Common myeloid progenitor, CD34-positive (primary cell): ENCODE measurements at regions of chr11 and their contacts with region 1.

Region 1: DNA sequence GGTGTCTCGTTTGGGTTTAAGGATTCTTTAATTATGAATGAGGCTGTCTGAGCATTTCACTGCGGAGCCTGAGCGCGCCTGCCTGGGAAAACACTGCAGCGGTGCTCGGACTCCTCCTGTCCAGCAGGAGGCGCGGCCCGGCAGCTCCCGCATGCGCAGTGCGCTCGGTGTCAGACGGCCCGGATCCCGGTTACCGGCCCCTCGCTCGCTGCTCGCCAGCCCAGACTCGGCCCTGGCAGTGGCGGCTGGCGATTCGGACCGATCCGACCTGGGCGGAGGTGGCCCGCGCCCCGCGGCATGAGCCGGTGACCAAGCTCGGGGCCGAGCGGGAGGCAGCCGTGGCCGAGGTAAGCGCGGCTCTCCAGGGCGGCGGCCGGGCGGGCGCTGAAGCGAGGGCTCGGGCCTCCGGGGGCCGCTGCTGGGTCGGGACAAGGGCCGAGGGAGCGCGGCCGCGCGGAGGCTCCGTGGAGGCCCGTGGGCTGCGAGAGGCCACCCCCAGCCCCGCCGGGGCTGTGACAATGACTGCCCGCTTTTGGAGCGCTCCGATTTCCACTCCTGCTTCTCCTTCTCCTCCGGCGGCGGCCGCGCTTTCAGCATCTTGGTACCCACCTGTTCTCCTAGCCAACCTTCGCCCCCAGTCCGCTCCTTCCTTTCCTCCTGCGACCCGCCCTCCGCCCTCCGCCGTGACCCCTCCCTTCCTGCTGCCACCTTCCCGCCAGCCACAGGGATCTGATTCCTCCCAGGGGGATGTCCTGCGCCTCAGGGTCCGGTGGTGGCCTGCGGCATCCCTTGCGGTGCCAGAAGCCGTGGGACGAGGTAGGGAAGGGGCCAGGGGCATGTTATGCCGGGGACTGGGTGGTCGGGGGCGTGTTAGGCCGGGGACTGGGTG is at the start of gene EXT2:
- DNase-seq: peak; percentile 81 to 84 (median 83)
- H3K4me3 ChIP-seq: peak within 1 kb of the TSS; percentile 80 to 96 (median 86)
- H3K27ac ChIP-seq: peak within 1 kb of the TSS; percentile 7 to 68
- H3K4me1 ChIP-seq: peaks cover 3 to 13% (median 8%) of the 10 kb centered on the region in 4 experiments
- H3K27me3 ChIP-seq: no peaks in the 10 kb centered on the region

Region 2: GRCh38 chr11:44065841-44066731 is 29.7 kb before region 1 on chr11 and contains the start of gene ACCS:
- CTCF ChIA-PET with region 1: interaction called, 34 read pairs
- POLR2A ChIA-PET with region 1: no interaction called
- DNase-seq: peak; percentile 98 to 99 (median 98)
- H3K4me3 ChIP-seq: peak within 1 kb of the TSS; percentile 45 to 91 (median 78)
- H3K27ac ChIP-seq: peak within 1 kb of the TSS; percentile 61 to 95
- H3K4me1 ChIP-seq: peaks cover 9 to 19% (median 14%) of the 10 kb centered on the region in 4 experiments
- H3K27me3 ChIP-seq: no peaks in the 10 kb centered on the region

Region 3: DNA sequence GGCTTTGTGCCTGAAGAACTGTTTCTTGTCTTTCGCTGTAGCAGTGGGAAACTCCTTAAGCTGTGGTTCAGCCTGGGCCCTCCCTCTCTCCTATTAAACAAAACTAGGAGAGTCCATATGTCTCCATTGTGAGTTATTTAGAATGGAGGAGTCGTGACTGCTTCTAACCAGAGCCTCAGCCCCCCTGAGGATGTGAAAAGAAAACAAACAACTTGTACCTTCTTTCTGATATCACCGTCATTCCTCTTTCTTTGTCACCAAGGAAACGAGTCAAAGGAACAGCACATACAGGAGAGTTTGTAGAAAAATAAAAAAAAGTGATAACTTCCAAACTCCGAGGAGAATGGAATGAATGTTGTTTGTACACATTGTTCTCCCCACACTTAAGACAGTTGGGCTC is 11.8 kb before region 1 on chr11:
- CTCF ChIA-PET with region 1: interaction called, 15 read pairs
- POLR2A ChIA-PET with region 1: no interaction called
- DNase-seq: no peak
- H3K4me3 ChIP-seq: no peak overlapping the region
- H3K27ac ChIP-seq: no peak overlapping the region
- H3K4me1 ChIP-seq: peaks cover 0 to 6% (median 4%) of the 10 kb centered on the region in 4 experiments
- H3K27me3 ChIP-seq: no peaks in the 10 kb centered on the region

Region 4: DNA sequence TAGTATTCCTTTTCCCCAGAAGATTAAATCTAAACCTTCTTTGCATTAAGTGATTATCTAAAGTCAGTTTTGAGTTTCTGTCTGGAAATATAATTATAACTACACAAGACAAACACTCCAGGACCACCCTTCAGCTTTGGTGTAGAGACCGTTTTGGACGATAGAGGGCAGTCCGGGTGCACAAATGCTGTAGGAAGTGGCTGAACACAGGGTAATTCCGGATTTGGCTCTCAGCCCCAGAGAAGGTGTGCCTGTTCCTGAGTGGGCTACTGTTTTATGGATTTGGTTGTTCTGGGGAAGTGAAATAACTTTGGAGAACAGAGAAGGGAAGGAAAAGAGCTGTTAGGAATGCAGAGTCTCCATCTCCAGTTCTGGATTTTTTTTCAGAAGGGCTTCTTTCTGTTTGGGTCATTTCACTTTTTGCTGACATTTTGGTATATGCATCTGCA is 14.5 kb after region 1 on chr11:
- CTCF ChIA-PET with region 1: interaction called, 84 read pairs
- POLR2A ChIA-PET with region 1: no interaction called
- DNase-seq: peak; percentile 60 to 78 (median 72)
- H3K4me3 ChIP-seq: no peak overlapping the region
- H3K27ac ChIP-seq: no peak overlapping the region
- H3K4me1 ChIP-seq: peaks cover 0 to 4% (median 2%) of the 10 kb centered on the region in 4 experiments
- H3K27me3 ChIP-seq: no peaks in the 10 kb centered on the region

Region 5: GRCh38 chr11:44120169-44120568 is 24.4 kb after region 1 on chr11:
- CTCF ChIA-PET with region 1: interaction called, 14 read pairs
- POLR2A ChIA-PET with region 1: no interaction called
- DNase-seq: peak in 2 of 3 donors; percentile 12 to 24
- H3K4me3 ChIP-seq: no peak overlapping the region
- H3K27ac ChIP-seq: no peak overlapping the region
- H3K4me1 ChIP-seq: no peaks in the 10 kb centered on the region
- H3K27me3 ChIP-seq: no peaks in the 10 kb centered on the region

Region 6: DNA sequence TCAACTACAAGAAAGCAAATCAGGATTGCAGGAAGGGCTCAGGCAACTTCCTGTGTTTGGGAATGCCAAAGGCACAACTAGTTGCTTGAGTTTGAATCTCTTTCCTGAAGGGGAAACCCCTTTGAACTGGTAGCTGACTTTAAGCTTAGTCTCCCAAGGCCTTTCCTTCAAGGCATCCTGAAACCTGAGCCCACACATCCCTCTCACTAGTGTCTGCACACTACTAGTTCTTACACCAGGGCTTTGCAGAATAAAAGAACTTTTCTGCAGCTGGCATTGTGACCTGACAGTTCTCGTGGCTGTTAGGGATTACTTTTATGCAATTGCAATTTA is 95.1 kb after region 1 on chr11:
- CTCF ChIA-PET with region 1: no interaction called
- POLR2A ChIA-PET with region 1: no interaction called
- DNase-seq: no peak
- H3K4me3 ChIP-seq: no peak overlapping the region
- H3K27ac ChIP-seq: no peak overlapping the region
- H3K4me1 ChIP-seq: no peaks in the 10 kb centered on the region
- H3K27me3 ChIP-seq: no peaks in the 10 kb centered on the region